Posterior vena cava (tissue), 2 donors: ENCODE measurements at regions of chr11 and their contacts with region 1.

Region 1: DNA sequence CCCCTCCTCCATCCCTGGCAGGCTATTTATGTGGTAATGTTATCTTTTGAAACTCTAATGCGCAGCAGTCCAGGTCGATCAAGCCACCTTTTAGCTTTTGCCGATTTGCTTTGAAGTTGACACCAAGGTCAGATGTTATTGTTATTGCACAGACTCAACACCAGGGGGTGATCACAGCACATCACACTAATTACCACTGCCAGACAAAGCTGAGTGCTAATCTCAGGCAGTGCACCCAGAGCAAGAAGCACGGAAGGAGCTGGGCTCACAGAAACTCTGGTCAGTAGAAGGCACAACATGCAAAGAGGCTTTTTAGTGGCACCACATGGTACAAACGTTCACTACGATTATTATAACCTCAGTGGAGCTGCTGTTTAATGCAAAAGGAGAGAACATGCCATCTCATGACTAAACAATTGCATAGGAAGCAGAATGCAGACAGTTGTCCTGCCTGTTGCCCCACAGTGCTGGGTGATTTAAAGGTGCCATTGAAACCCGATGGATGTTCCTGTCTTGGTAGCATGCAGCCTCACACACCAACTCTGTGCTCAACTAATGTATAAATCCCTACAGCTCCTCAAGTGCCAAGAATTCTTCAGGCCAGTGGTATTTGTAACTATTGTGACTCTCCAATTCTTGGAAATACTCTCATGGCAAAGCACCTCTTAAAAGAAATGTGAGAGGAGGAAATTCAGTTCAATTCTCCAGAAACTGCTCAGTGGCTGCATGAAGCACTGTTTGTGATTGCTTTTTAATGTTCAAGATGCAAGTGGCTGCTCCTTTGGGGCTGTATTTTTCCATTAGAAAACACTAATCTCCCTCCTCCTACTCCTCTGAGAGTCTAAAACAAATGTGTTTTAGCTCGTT is 353.9 kb upstream of the DDI1 start:
- DNase-seq: no peak

Region 2: DNA sequence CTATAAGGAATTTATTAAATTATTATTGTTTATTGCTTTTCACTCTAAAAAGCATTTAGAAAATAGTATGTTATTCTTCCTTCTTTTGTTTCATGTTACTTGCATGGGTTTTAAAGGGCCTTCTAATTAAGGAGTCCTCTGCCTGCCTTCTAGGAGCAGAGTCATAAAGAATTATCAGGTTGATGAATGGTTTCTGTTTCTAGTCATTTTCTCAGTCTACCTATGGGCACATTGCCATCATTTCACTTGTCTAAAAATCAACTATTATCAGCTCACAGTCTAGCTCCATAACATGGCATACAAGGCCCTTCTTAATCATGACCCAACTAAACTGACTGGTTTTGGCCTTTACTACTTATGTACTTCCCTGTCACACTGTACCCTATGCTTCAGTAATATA is 557.1 kb before region 1 on chr11:
- intact Hi-C with region 1: no loop called
- DNase-seq: no peak

Region 3: DNA sequence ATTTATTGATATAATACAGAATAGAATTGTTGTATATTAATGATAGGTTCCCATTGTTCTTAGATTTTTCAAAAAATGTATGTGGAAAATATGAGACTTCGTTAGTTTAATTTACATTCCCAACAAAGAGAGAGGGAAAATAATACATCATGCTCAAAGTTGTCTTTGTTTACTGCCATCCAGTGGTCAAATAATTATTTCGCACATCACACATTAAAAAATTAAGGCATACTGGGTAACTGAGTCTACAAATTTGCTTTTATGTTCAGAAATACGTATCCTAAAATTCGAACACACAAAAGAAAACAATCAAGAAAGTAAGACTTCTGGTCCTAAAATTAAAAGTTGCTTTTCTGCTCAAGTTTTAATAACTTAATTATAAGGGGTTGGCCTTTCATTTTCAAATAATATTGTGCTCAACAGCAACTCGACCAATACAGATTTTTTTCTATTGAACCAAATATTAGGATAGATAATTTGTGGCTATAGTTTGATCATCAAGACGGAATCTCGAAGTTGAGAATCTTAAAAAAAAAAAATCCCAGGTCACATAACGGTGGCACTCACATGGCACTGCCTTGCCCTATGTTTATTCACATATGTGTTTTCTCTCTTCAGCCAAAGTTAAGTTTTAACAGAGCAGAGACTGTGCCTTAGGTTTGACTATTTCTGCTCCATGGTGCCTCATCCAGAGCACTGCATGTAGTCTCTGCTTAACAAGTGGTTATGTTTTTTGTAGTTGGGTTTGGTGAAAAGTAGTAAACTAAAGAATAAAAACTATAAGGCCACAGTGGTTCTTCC is 469.1 kb after region 1 on chr11:
- intact Hi-C with region 1: loop called (anchors 5 to 10 kb)
- DNase-seq: no peak

Region 4: GRCh38 chr11:105538588-105538987 is 1856.0 kb after region 1 on chr11:
- intact Hi-C with region 1: no loop called
- DNase-seq: no peak